Naive thymus-derived CD4-positive, alpha-beta T cell (primary cell): ENCODE measurements at regions of chr4 and their contacts with region 1.

Region 1: DNA sequence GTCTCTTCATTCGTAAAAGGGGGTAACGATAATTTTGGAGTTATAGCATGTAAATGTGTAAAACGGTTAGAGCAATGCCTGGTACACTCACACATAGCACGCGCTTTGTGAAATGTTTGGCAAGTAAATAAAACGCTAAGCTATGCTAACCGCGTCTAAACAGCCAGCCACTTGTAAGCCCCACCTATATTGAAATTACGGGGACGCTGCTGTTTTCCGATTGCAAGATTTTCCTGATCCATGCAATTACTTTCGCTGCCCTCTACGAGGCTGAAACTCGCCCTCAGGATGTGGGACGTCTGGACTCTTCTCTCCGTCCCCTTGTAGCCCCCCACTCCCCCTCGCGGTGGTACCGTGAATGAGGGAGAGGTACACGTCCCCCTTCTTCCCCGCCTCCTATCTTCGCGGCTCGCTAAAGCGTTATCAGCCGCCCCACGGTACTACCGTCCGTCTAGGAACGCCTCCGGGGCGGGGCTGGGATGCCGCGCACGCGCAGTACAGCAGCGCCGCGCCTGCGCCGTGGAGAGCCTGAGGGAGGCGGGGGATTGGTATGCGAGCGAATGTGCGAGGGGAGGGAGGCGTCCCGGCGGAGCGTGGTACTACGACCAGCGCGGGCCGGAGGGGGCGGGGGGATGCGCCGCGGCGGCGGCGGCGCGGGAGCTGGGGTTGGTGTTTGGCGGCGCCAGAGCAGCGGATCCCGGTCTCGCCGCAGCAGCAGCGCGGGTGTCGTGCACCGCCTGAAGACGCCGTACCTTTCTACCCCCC is at the start of gene STIM2:
- DNase-seq: peak; percentile 95 to 100 (median 99)
- ATAC-seq: peak; percentile 80
- H3K4me3 ChIP-seq: peak within 1 kb of the TSS; percentile 77
- H3K4me3 Mint-ChIP-seq: peak within 1 kb of the TSS; percentile 95 to 100 (median 98)
- H3K27ac ChIP-seq: peak within 1 kb of the TSS; percentile 91
- H3K27ac Mint-ChIP-seq: peak within 1 kb of the TSS; percentile 95 to 99 (median 98)
- H3K4me1 ChIP-seq: peaks cover 46 to 48% of the 10 kb centered on the region in 2 donors
- H3K4me1 Mint-ChIP-seq: peaks cover 47 to 71% (median 66%) of the 10 kb centered on the region in 7 donors
- H3K27me3 ChIP-seq: no peaks in the 10 kb centered on the region
- H3K27me3 Mint-ChIP-seq: peaks cover 0 to 3% (median 0%) of the 10 kb centered on the region in 5 donors
- total RNA-seq, gene STIM2: 61.7 to 103 (median 74.5) TPM

Region 2: GRCh38 chr4:25234390-25235370 is 1625.7 kb before region 1 on chr4:
- CTCF ChIA-PET with region 1: no interaction called
- POLR2A ChIA-PET with region 1: no interaction called
- intact Hi-C with region 1: loop called (anchors 1 to 2 kb)
- DNase-seq: peak; percentile 20 to 76 (median 64)
- ATAC-seq: peak; percentile 70
- H3K4me3 ChIP-seq: peak overlapping the region; percentile 80
- H3K4me3 Mint-ChIP-seq: peak overlapping the region; percentile 86 to 99 (median 94)
- H3K27ac ChIP-seq: peak overlapping the region; percentile 89
- H3K27ac Mint-ChIP-seq: peak overlapping the region; percentile 89 to 98 (median 95)
- H3K4me1 ChIP-seq: peaks cover 16 to 29% of the 10 kb centered on the region in 2 donors
- H3K4me1 Mint-ChIP-seq: peaks cover 16 to 57% (median 44%) of the 10 kb centered on the region in 7 donors
- H3K27me3 ChIP-seq: no peaks in the 10 kb centered on the region
- H3K27me3 Mint-ChIP-seq: no peaks in the 10 kb centered on the region

Region 3: GRCh38 chr4:25913851-25914669 is 946.3 kb before region 1 on chr4 and contains the start of gene SMIM20:
- CTCF ChIA-PET with region 1: no interaction called
- POLR2A ChIA-PET with region 1: interaction called, 4 read pairs
- intact Hi-C with region 1: loop called (anchors 1 kb)
- DNase-seq: peak; percentile 84 to 92 (median 90)
- ATAC-seq: peak; percentile 98
- H3K4me3 ChIP-seq: peak within 1 kb of the TSS; percentile 86
- H3K4me3 Mint-ChIP-seq: peak within 1 kb of the TSS; percentile 88 to 99 (median 96)
- H3K27ac ChIP-seq: peak within 1 kb of the TSS; percentile 82
- H3K27ac Mint-ChIP-seq: peak within 1 kb of the TSS; percentile 95 to 99 (median 98)
- H3K4me1 ChIP-seq: peaks cover 11 to 16% of the 10 kb centered on the region in 2 donors
- H3K4me1 Mint-ChIP-seq: peaks cover 13 to 27% (median 19%) of the 10 kb centered on the region in 7 donors
- H3K27me3 ChIP-seq: no peaks in the 10 kb centered on the region
- H3K27me3 Mint-ChIP-seq: peaks cover 0 to 7% (median 0%) of the 10 kb centered on the region in 5 donors
- total RNA-seq, gene SMIM20: 11.6 to 22.8 (median 14.5) TPM

Region 4: DNA sequence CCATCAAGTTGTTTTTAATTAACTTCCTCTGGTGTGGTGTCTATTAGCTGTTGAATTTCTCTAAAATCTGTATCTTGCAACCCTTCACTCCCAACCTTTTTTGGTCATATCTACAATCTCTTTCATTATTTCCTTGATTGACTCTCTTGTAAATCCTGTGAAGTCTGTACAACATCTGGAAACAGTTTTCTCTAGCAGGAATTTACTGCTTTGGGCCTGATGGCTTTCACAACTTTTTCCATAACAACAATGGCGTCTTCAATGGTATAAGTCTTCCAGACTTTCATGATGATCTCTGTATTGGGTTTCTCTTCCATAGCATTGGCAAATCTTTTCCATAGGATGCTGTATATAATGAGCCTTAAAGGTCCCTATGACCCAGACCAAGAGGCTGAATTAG is 227.4 kb before region 1 on chr4:
- CTCF ChIA-PET with region 1: no interaction called
- POLR2A ChIA-PET with region 1: no interaction called
- intact Hi-C with region 1: no loop called
- DNase-seq: no peak
- ATAC-seq: no peak
- H3K4me3 ChIP-seq: no peak overlapping the region
- H3K4me3 Mint-ChIP-seq: no peak overlapping the region
- H3K27ac ChIP-seq: no peak overlapping the region
- H3K27ac Mint-ChIP-seq: no peak overlapping the region
- H3K4me1 ChIP-seq: no peaks in the 10 kb centered on the region
- H3K4me1 Mint-ChIP-seq: peaks cover 0 to 4% (median 0%) of the 10 kb centered on the region in 7 donors
- H3K27me3 ChIP-seq: no peaks in the 10 kb centered on the region
- H3K27me3 Mint-ChIP-seq: no peaks in the 10 kb centered on the region

Region 5: GRCh38 chr4:26719954-26720552 is 140.3 kb before region 1 on chr4:
- CTCF ChIA-PET with region 1: no interaction called
- POLR2A ChIA-PET with region 1: interaction called, 3 read pairs
- intact Hi-C with region 1: loop called in 1 of 2 experiments (anchors 5 kb)
- DNase-seq: no peak
- ATAC-seq: no peak
- H3K4me3 ChIP-seq: no peak overlapping the region
- H3K4me3 Mint-ChIP-seq: no peak overlapping the region
- H3K27ac ChIP-seq: no peak overlapping the region
- H3K27ac Mint-ChIP-seq: no peak overlapping the region
- H3K4me1 ChIP-seq: peaks cover 5 to 9% of the 10 kb centered on the region in 2 donors
- H3K4me1 Mint-ChIP-seq: peaks cover 0 to 23% (median 13%) of the 10 kb centered on the region in 7 donors
- H3K27me3 ChIP-seq: no peaks in the 10 kb centered on the region
- H3K27me3 Mint-ChIP-seq: no peaks in the 10 kb centered on the region

Region 6: DNA sequence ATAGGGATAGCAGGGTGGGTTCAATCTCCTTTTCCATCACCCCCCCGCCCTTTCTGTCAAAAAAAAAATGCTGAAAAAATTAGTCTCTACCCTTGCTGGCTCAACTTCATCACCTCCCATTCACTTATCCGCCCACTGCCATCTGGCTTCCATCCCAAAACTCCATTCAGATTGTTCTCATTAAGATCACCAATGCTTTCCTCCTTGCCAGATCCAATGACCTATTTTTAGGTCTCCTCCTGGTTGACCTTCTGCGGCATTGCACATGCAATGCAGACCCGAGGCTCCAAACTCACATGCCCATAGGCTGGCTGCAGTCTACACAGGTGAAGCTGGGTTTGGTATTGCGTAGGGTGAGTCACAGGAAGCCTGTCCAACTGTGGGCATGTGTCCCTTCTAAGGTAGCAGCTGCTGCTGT is 20.8 kb before region 1 on chr4:
- CTCF ChIA-PET with region 1: no interaction called
- POLR2A ChIA-PET with region 1: no interaction called
- intact Hi-C with region 1: no loop called
- DNase-seq: no peak
- ATAC-seq: no peak
- H3K4me3 ChIP-seq: no peak overlapping the region
- H3K4me3 Mint-ChIP-seq: peak overlapping the region in 2 of 10 donors; percentile 5 to 22
- H3K27ac ChIP-seq: no peak overlapping the region
- H3K27ac Mint-ChIP-seq: peak overlapping the region in 7 of 9 donors; percentile 2 to 89 (median 43)
- H3K4me1 ChIP-seq: no peaks in the 10 kb centered on the region
- H3K4me1 Mint-ChIP-seq: peaks cover 0 to 15% (median 5%) of the 10 kb centered on the region in 7 donors
- H3K27me3 ChIP-seq: no peaks in the 10 kb centered on the region
- H3K27me3 Mint-ChIP-seq: peaks cover 0 to 7% (median 0%) of the 10 kb centered on the region in 5 donors

Region 7: GRCh38 chr4:26885912-26886274 is 25.6 kb after region 1 on chr4:
- CTCF ChIA-PET with region 1: interaction called, 30 read pairs
- POLR2A ChIA-PET with region 1: interaction called, 126 read pairs
- intact Hi-C with region 1: loop called (anchors 1 kb)
- DNase-seq: peak in 7 of 9 donors; percentile 60 to 81 (median 77)
- ATAC-seq: peak; percentile 76
- H3K4me3 ChIP-seq: peak overlapping the region; percentile 45
- H3K4me3 Mint-ChIP-seq: peak overlapping the region; percentile 70 to 91 (median 82)
- H3K27ac ChIP-seq: peak overlapping the region; percentile 73
- H3K27ac Mint-ChIP-seq: peak overlapping the region; percentile 93 to 98 (median 95)
- H3K4me1 ChIP-seq: peaks cover 32 to 39% of the 10 kb centered on the region in 2 donors
- H3K4me1 Mint-ChIP-seq: peaks cover 33 to 95% (median 84%) of the 10 kb centered on the region in 7 donors
- H3K27me3 ChIP-seq: no peaks in the 10 kb centered on the region
- H3K27me3 Mint-ChIP-seq: no peaks in the 10 kb centered on the region

Region 8: GRCh38 chr4:26959654-26960047 is 99.3 kb after region 1 on chr4:
- CTCF ChIA-PET with region 1: no interaction called
- POLR2A ChIA-PET with region 1: no interaction called
- intact Hi-C with region 1: loop called in 1 of 2 experiments (anchors 1 kb)
- DNase-seq: peak in 1 of 9 donors; percentile 12
- ATAC-seq: peak; percentile 52
- H3K4me3 ChIP-seq: no peak overlapping the region
- H3K4me3 Mint-ChIP-seq: peak overlapping the region in 5 of 10 donors; percentile 0 to 42 (median 4)
- H3K27ac ChIP-seq: no peak overlapping the region
- H3K27ac Mint-ChIP-seq: peak overlapping the region in 5 of 9 donors; percentile 14 to 67 (median 38)
- H3K4me1 ChIP-seq: peaks cover 0 to 11% of the 10 kb centered on the region in 2 donors
- H3K4me1 Mint-ChIP-seq: peaks cover 24 to 83% (median 71%) of the 10 kb centered on the region in 7 donors
- H3K27me3 ChIP-seq: no peaks in the 10 kb centered on the region
- H3K27me3 Mint-ChIP-seq: no peaks in the 10 kb centered on the region

Region 9: DNA sequence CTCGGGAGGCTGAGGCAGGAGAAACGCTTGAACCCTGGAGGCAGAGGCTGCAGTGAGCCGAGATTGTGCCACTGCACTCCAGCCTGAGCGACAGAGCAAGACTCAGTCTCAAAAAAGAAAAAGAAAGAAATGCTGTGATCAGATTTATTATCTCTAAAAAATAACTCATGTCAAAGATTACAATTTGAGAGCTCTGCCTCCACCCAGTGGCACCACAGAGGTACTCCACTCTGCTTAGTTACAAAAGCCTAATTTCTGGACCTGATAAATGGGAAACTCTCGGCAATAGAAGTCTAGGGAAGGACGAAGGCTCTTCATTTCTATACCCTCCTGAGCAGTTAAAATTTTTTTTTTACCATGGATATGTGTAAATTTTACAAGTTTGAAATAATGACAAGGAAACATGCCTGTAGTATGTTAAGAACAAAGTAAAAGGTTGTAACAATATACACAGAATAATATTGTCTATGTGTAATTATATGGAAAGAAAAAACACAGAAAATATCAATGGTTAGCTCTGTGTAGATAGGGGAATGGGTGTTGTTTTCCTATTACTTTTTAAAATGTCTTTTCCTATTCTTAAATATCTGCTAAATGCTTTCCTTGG is 150.1 kb after region 1 on chr4:
- CTCF ChIA-PET with region 1: interaction called, 5 read pairs
- POLR2A ChIA-PET with region 1: interaction called, 25 read pairs
- intact Hi-C with region 1: loop called (anchors 1 kb)
- DNase-seq: peak; percentile 17 to 67 (median 52)
- ATAC-seq: peak; percentile 89
- H3K4me3 ChIP-seq: no peak overlapping the region
- H3K4me3 Mint-ChIP-seq: no peak overlapping the region
- H3K27ac ChIP-seq: no peak overlapping the region
- H3K27ac Mint-ChIP-seq: peak overlapping the region in 7 of 9 donors; percentile 6 to 91 (median 71)
- H3K4me1 ChIP-seq: no peaks in the 10 kb centered on the region
- H3K4me1 Mint-ChIP-seq: peaks cover 6 to 25% (median 14%) of the 10 kb centered on the region in 7 donors
- H3K27me3 ChIP-seq: no peaks in the 10 kb centered on the region
- H3K27me3 Mint-ChIP-seq: no peaks in the 10 kb centered on the region